ENCODE measurements at regions of chr11 and their contacts with region 1.

Region 1: DNA sequence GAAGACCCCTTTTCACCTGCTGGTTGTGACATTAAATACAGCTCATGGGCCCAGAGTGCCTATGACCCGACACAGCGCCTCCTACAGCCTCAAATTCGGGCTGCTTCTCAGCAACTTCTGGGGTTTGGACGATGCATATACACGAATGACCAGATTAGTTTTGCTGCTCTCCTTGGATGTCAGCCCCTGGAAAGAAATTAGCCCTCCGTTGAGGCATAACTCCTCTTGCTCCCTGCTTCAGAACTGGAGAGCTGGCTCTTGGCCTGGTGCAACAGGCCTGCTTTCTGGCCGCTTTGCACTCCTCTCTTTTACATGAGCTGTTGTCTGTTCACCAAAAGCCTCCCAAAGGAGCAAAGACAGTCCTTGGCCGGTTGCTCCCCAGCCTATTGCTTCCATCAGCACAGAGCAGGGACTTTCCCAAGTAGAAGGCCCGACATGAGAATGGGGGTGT is 3.3 kb downstream of the TECTA start:
- DNase-seq: peak; percentile 52
- ATAC-seq: peak; percentile 89
- H3K4me3 Mint-ChIP-seq: no peak overlapping the region
- H3K27ac Mint-ChIP-seq: no peak overlapping the region
- H3K4me1 Mint-ChIP-seq: peaks cover 28% of the 10 kb centered on the region
- H3K27me3 Mint-ChIP-seq: no peaks in the 10 kb centered on the region
- CTCF ChIP-seq: peak; percentile 30; the same call in 1 of the 2 replicates

Region 2: DNA sequence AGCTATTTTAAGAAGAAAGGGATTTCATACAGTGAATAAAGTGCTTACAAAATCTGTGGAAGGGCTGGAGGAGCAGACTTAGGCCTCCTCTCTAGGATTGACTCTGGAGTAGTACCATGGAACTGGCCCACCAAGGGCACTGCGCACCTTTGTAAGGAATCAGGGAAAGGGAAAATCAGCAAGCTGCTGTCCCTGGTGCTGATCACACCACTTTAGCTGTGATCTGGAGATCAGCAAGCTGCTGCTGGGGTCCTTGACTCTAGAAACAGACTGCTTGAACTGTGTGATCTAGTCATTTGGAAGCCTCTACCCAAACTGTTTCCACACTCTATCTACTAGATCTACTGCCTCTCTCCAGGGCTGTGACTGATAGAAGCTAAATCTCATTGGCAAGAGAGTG is 21.7 kb before region 1 on chr11:
- CTCF ChIA-PET with region 1: interaction called, 11 read pairs
- POLR2A ChIA-PET with region 1: no interaction called
- DNase-seq: peak; percentile 73
- ATAC-seq: peak; percentile 84
- H3K4me3 Mint-ChIP-seq: no peak overlapping the region
- H3K27ac Mint-ChIP-seq: no peak overlapping the region
- H3K4me1 Mint-ChIP-seq: no peaks in the 10 kb centered on the region
- H3K27me3 Mint-ChIP-seq: no peaks in the 10 kb centered on the region
- CTCF ChIP-seq: no peak

Region 3: GRCh38 chr11:121090145-121090721 is 14.1 kb before region 1 on chr11:
- CTCF ChIA-PET with region 1: interaction called, 10 read pairs
- POLR2A ChIA-PET with region 1: no interaction called
- DNase-seq: no peak
- ATAC-seq: no peak
- H3K4me3 Mint-ChIP-seq: no peak overlapping the region
- H3K27ac Mint-ChIP-seq: no peak overlapping the region
- H3K4me1 Mint-ChIP-seq: no peaks in the 10 kb centered on the region
- H3K27me3 Mint-ChIP-seq: no peaks in the 10 kb centered on the region
- CTCF ChIP-seq: no peak

Region 4: DNA sequence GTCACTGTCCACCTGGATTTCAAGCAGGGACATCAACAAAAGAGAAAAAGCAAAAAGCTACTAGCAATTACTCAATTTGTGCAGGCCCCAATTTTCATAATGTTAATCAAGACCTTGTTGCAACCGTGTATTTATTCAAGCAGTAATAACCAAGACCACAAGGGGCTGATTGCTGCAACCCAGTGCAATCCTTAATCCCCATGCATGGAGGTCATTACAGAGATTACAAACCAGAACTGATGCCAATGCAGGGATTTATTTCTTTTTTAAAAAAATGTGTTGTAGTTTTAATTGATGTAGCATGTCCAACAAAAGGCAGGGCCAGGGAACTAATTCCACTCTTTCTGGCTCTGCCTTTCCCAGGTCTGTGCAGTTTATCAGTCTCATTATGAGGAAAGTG is 15.1 kb after region 1 on chr11:
- CTCF ChIA-PET with region 1: interaction called, 12 read pairs
- POLR2A ChIA-PET with region 1: no interaction called
- DNase-seq: no peak
- ATAC-seq: no peak
- H3K4me3 Mint-ChIP-seq: no peak overlapping the region
- H3K27ac Mint-ChIP-seq: no peak overlapping the region
- H3K4me1 Mint-ChIP-seq: peaks cover 5% of the 10 kb centered on the region
- H3K27me3 Mint-ChIP-seq: no peaks in the 10 kb centered on the region
- CTCF ChIP-seq: no peak

Region 5: GRCh38 chr11:121194731-121195596 is 90.6 kb after region 1 on chr11:
- CTCF ChIA-PET with region 1: interaction called, 13 read pairs
- POLR2A ChIA-PET with region 1: no interaction called
- DNase-seq: peak; percentile 49
- ATAC-seq: peak; percentile 86
- H3K4me3 Mint-ChIP-seq: no peak overlapping the region
- H3K27ac Mint-ChIP-seq: no peak overlapping the region
- H3K4me1 Mint-ChIP-seq: peaks cover 48% of the 10 kb centered on the region
- H3K27me3 Mint-ChIP-seq: no peaks in the 10 kb centered on the region
- CTCF ChIP-seq: peak; percentile 90